ENCODE measurements at regions of chr9 and their contacts with region 1.

Region 1: DNA sequence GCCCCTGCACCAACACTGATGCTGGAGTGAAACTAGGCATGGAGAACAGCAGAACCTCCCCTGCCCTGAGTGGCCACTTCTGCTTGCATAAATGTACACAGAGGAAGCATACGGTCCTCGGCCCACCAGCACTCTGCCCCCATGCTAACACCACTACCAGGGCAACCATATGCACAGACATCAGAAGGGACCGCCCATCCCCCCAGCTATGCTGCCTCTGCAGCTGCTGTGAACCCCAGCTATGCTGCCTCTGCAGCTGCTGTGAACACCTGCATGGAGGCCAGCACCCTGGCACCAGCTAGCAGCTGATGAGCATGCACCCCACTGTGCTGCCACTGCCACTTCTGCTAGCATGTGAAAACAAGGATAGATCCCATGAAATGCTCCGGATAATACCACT is 250.3 kb downstream of the TUSC1 start:
- DNase-seq: no peak
- ATAC-seq: no peak
- H3K4me3 ChIP-seq: no peak overlapping the region
- H3K4me3 Mint-ChIP-seq: no peak overlapping the region
- H3K27ac ChIP-seq: no peak overlapping the region
- H3K27ac Mint-ChIP-seq: no peak overlapping the region
- H3K4me1 ChIP-seq: no peaks in the 10 kb centered on the region
- H3K4me1 Mint-ChIP-seq: no peaks in the 10 kb centered on the region
- H3K27me3 ChIP-seq: no peaks in the 10 kb centered on the region
- H3K27me3 Mint-ChIP-seq: no peaks in the 10 kb centered on the region
- CTCF ChIP-seq: no peak

Region 2: GRCh38 chr9:25129537-25129936 is 298.4 kb before region 1 on chr9:
- CTCF ChIA-PET with region 1: no interaction called
- POLR2A ChIA-PET with region 1: no interaction called
- intact Hi-C with region 1: no loop called
- DNase-seq: no peak
- ATAC-seq: no peak
- H3K4me3 ChIP-seq: no peak overlapping the region
- H3K4me3 Mint-ChIP-seq: no peak overlapping the region
- H3K27ac ChIP-seq: no peak overlapping the region
- H3K27ac Mint-ChIP-seq: no peak overlapping the region
- H3K4me1 ChIP-seq: no peaks in the 10 kb centered on the region
- H3K4me1 Mint-ChIP-seq: no peaks in the 10 kb centered on the region
- H3K27me3 ChIP-seq: no peaks in the 10 kb centered on the region
- H3K27me3 Mint-ChIP-seq: no peaks in the 10 kb centered on the region
- CTCF ChIP-seq: no peak

Region 3: GRCh38 chr9:26077860-26078259 is 650.0 kb after region 1 on chr9:
- CTCF ChIA-PET with region 1: no interaction called
- POLR2A ChIA-PET with region 1: no interaction called
- intact Hi-C with region 1: loop called in 1 of 2 experiments (anchors 10 kb)
- DNase-seq: no peak
- ATAC-seq: no peak
- H3K4me3 ChIP-seq: no peak overlapping the region
- H3K4me3 Mint-ChIP-seq: no peak overlapping the region
- H3K27ac ChIP-seq: no peak overlapping the region
- H3K27ac Mint-ChIP-seq: no peak overlapping the region
- H3K4me1 ChIP-seq: no peaks in the 10 kb centered on the region
- H3K4me1 Mint-ChIP-seq: no peaks in the 10 kb centered on the region
- H3K27me3 ChIP-seq: no peaks in the 10 kb centered on the region
- H3K27me3 Mint-ChIP-seq: no peaks in the 10 kb centered on the region
- CTCF ChIP-seq: no peak

Region 4: DNA sequence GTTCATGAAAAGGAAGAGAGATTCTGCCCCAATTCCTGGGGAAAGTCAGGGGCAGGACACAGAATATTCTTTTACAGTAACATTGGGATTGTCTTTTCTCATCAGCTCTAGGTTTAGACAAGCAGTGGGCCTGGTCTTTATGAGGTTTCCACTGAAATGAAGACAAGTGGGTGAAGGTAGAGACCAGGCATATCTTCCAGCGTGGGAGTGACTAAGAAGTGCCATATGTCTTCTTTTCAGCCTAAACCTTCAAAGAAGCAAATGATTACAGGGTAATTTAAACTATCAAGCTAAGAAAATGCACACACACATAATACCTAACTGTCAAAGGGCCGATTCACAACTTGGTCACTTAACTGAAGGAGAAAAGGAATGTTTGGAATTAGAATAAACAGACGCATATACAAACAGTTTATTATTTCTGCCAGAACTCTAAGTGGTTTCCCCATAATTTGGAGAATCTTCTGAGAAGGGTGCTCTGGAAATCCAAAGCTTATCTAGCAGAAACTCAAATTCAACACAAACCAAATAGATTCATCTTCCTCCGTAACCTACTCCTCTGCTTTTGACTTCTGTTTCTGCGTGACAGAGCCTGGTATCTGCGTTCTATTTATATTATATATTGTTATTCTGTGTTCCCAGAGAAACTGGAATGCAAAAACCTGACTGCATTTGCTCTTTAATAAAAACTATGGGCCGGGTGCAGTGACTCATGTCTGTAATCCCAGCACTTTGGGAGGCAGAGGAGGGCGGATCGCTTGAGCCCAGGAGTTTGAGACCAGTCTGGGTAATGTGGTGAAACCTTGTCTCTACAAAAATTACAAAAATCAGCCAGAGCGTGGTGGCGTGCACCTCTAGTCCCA is 1659.2 kb after region 1 on chr9:
- CTCF ChIA-PET with region 1: no interaction called
- POLR2A ChIA-PET with region 1: no interaction called
- intact Hi-C with region 1: no loop called
- DNase-seq: no peak
- ATAC-seq: no peak
- H3K4me3 ChIP-seq: no peak overlapping the region
- H3K4me3 Mint-ChIP-seq: no peak overlapping the region
- H3K27ac ChIP-seq: no peak overlapping the region
- H3K27ac Mint-ChIP-seq: no peak overlapping the region
- H3K4me1 ChIP-seq: no peaks in the 10 kb centered on the region
- H3K4me1 Mint-ChIP-seq: no peaks in the 10 kb centered on the region
- H3K27me3 ChIP-seq: no peaks in the 10 kb centered on the region
- H3K27me3 Mint-ChIP-seq: no peaks in the 10 kb centered on the region
- CTCF ChIP-seq: no peak

Measured in CD4-positive, alpha-beta T cell (primary cell).